Natural killer cell (primary cell): ENCODE measurements at regions of chr16 and their contacts with region 1.

Region 1: GRCh38 chr16:46555951-46556350 is 65.2 kb downstream of the SHCBP1 start:
- DNase-seq: no peak
- ATAC-seq: no peak
- H3K4me3 ChIP-seq: no peak overlapping the region
- H3K4me3 Mint-ChIP-seq: no peak overlapping the region
- H3K27ac ChIP-seq: no peak overlapping the region
- H3K27ac Mint-ChIP-seq: no peak overlapping the region
- H3K4me1 ChIP-seq: peaks cover 2% of the 10 kb centered on the region
- H3K4me1 Mint-ChIP-seq: peaks cover 5 to 8% of the 10 kb centered on the region in 2 donors
- H3K27me3 ChIP-seq: no peaks in the 10 kb centered on the region
- H3K27me3 Mint-ChIP-seq: peaks cover 2 to 16% of the 10 kb centered on the region in 2 donors
- CTCF ChIP-seq: no peak

Region 2: DNA sequence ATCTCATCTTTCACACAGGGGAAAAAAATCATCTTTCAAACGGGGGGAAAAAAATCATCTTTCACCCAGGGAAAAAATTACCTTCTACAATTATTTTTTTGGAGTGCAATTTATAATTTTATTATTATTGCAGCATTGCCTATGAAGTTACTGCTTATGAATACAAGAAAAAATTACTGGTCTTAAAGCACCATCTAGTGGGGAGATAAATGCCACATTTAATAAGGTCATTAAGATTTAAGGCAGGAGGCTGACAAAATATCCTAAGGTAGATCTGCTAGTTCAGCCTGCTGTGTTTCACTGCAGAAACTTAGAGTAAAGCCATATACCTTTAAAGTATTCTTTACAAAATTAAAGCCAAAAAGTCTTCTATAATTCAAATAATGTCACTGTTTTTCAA is 51.6 kb after region 1 on chr16:
- intact Hi-C with region 1: loop called (anchors 1 kb)
- DNase-seq: peak in 1 of 2 donors; percentile 68
- ATAC-seq: peak in 1 of 3 donors; percentile 45
- H3K4me3 ChIP-seq: no peak overlapping the region
- H3K4me3 Mint-ChIP-seq: no peak overlapping the region
- H3K27ac ChIP-seq: no peak overlapping the region
- H3K27ac Mint-ChIP-seq: peak overlapping the region in 1 of 2 donors; percentile 37
- H3K4me1 ChIP-seq: no peaks in the 10 kb centered on the region
- H3K4me1 Mint-ChIP-seq: no peaks in the 10 kb centered on the region
- H3K27me3 ChIP-seq: no peaks in the 10 kb centered on the region
- H3K27me3 Mint-ChIP-seq: no peaks in the 10 kb centered on the region
- CTCF ChIP-seq: peak; percentile 48